Heart right ventricle (tissue), 16 donors: ENCODE measurements at regions of chr16 and their contacts with region 1.

Region 1: GRCh38 chr16:52050418-52050817 is 496.5 kb downstream of the TOX3 start:
- DNase-seq: no peak
- ATAC-seq: no peak
- H3K4me3 ChIP-seq: no peak overlapping the region
- H3K27ac ChIP-seq: no peak overlapping the region
- H3K4me1 ChIP-seq: no peaks in the 10 kb centered on the region
- H3K27me3 ChIP-seq: no peaks in the 10 kb centered on the region
- CTCF ChIP-seq: no peak

Region 2: GRCh38 chr16:51994597-51994996 is 55.8 kb before region 1 on chr16:
- intact Hi-C with region 1: loop called in 1 of 10 experiments (anchors 10 kb)
- DNase-seq: peak in 1 of 2 donors; percentile 18
- ATAC-seq: peak in 1 of 8 donors; percentile 16
- H3K4me3 ChIP-seq: no peak overlapping the region
- H3K27ac ChIP-seq: no peak overlapping the region
- H3K4me1 ChIP-seq: no peaks in the 10 kb centered on the region
- H3K27me3 ChIP-seq: no peaks in the 10 kb centered on the region
- CTCF ChIP-seq: no peak